ENCODE measurements at regions of chr1 and their contacts with region 1.

Region 1: GRCh38 chr1:243325305-243325890 is 69.6 kb downstream of the SDCCAG8 start:
- DNase-seq: peak in 1 of 2 experiments; percentile 56
- H3K4me3 ChIP-seq: no peak overlapping the region
- H3K4me3 Mint-ChIP-seq: no peak overlapping the region
- H3K27ac Mint-ChIP-seq: no peak overlapping the region
- H3K4me1 ChIP-seq: no peaks in the 10 kb centered on the region
- H3K4me1 Mint-ChIP-seq: no peaks in the 10 kb centered on the region
- H3K27me3 ChIP-seq: no peaks in the 10 kb centered on the region
- H3K27me3 Mint-ChIP-seq: no peaks in the 10 kb centered on the region
- CTCF ChIP-seq: peak; percentile 57 to 67

Region 2: DNA sequence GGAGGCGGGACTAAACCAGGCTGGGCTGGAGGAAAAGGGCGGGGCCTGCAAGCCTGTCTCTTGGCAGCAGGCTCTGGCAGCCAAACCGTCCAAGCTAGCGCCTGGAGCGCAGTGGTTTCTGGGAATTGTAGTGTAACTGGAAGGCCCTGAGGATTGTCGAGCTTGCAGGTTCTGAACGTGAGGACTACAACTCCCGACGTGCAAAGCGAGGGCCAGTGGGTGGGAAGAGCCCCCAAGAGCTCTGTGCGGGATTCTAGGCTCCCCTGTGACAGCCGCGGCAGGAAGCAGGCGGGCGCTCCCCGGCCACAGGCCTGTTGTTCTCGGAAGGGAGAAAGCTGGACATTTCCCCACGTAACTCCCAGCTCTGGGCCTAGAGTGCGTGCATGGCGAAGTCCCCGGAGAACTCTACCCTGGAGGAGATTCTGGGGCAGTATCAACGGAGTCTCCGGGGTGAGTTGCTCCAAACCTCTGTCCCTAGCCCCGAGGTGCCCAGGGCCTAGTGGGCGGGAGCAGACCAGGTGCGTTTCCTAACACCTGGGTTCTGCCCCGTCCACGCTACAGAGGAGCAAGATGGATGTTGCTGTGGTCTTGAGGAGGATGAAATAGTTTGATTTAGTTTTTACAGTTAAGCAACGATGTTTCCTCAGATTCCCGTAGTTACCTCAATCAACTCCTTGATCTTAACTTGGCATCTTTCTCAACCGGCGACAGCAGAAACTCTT is 69.4 kb before region 1 on chr1 and contains the start of gene SDCCAG8:
- CTCF ChIA-PET with region 1: no interaction called
- POLR2A ChIA-PET with region 1: no interaction called
- intact Hi-C with region 1: loop called (anchors 1 kb)
- DNase-seq: peak; percentile 97 to 99
- H3K4me3 ChIP-seq: peak within 1 kb of the TSS; percentile 92
- H3K4me3 Mint-ChIP-seq: peak within 1 kb of the TSS; percentile 93
- H3K27ac Mint-ChIP-seq: peak within 1 kb of the TSS; percentile 93
- H3K4me1 ChIP-seq: peaks cover 7% of the 10 kb centered on the region
- H3K4me1 Mint-ChIP-seq: no peaks in the 10 kb centered on the region
- H3K27me3 ChIP-seq: no peaks in the 10 kb centered on the region
- H3K27me3 Mint-ChIP-seq: no peaks in the 10 kb centered on the region
- CTCF ChIP-seq: no peak
- total RNA-seq, gene SDCCAG8: 20.0 and 23.0 TPM in 2 replicates